Esophagus muscularis mucosa (tissue), 4 donors: ENCODE measurements at regions of chr21 and their contacts with region 1.

Region 1: DNA sequence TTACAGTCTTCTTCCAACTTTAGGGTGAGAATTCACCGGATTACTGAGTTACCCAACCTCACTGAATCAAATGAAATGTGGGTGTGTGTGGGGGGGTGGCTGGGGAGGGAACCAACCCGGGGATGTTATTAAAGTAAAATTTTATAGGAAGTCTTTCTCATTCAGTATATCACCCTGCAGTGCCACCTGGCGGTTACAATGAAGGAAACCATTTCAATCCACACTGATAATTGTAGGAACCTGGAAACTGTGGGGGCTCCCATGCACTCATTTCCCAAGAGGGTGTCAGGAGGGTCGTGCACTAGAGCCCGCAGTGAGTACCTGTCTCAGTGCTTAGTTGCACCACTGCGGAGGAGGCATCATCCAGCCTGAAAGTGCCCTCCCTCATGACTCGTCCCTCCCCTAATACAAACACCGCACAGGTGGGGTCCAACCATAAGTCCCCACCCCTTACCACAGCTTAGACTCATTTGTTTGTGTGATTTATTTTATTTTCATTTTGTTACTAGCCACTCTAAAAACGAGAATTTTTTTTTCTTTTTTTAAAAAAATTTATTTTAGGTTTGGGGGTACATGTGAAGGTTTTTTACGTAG is 29.1 kb upstream of the IGSF5 start:
- DNase-seq: no peak
- H3K4me3 ChIP-seq: no peak overlapping the region
- H3K27ac ChIP-seq: no peak overlapping the region
- H3K4me1 ChIP-seq: peaks cover 0 to 4% (median 0%) of the 10 kb centered on the region in 4 donors
- H3K27me3 ChIP-seq: peaks cover 0 to under 1% (median 0%) of the 10 kb centered on the region in 4 donors
- CTCF ChIP-seq: peak; percentile 60 to 70 (median 70)
- EP300 ChIP-seq: no peak
- POLR2A ChIP-seq: no peak

Region 2: DNA sequence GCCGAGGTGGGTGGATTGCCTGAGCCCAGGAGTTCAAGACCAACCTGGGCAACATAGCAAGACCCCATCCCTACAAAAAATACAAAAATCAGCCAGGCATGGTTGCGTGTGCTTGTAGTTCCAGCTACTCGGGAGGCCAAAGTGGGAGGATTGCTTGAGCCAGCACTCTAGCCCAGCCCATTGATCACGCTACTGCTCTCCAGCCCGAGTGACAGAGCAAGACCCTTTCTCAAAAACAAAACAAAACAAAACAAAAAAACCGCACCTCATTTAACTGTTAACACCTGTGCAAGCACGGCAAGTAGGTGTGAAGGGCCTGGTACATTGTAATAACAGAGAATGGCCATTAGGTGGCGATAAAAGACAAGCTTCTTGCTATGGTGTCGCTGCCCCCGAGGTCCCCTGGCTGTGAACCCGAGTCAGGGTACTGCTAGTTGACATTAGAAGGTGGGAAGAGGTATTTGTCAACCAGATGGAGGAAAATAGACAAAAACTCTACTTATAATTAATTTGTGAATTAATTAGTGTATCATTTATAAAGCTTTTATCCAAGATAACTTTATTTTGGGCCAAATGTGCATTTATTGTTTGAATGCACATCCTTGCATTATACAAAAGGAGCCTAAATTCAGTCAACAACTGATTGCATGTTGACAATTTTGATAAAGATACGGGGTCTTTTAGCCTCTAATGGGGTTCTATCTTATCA is 197.6 kb before region 1 on chr21:
- intact Hi-C with region 1: loop called (anchors 2 kb)
- DNase-seq: peak; percentile 89
- H3K4me3 ChIP-seq: no peak overlapping the region
- H3K27ac ChIP-seq: no peak overlapping the region
- H3K4me1 ChIP-seq: peaks cover 0 to 10% (median 5%) of the 10 kb centered on the region in 4 donors
- H3K27me3 ChIP-seq: no peaks in the 10 kb centered on the region
- CTCF ChIP-seq: peak; percentile 84 to 91 (median 90)
- EP300 ChIP-seq: no peak
- POLR2A ChIP-seq: no peak

Region 3: DNA sequence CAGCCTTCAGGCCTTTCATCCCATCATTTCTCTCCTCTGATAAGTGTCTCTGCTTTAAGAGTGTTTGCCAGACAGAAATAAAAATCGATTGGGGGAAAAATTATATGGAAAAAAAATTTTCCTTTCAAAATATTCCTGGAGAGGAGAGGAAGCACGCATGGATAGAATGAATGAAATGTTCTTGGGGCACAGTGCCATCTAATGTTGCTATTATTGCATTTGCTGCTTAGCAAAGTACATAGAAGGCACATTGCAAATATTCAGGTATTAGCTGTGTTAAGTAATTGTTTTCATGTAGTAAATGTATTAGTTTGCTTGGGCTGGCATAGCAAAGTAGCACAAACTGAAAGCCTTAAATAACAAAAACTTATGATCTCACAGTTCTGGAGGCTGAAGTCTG is 85.1 kb before region 1 on chr21:
- intact Hi-C with region 1: no loop called
- DNase-seq: no peak
- H3K4me3 ChIP-seq: no peak overlapping the region
- H3K27ac ChIP-seq: no peak overlapping the region
- H3K4me1 ChIP-seq: peaks cover 0 to 11% (median 4%) of the 10 kb centered on the region in 4 donors
- H3K27me3 ChIP-seq: peaks cover 0 to 6% (median 0%) of the 10 kb centered on the region in 4 donors
- CTCF ChIP-seq: no peak
- EP300 ChIP-seq: no peak
- POLR2A ChIP-seq: no peak

Region 4: DNA sequence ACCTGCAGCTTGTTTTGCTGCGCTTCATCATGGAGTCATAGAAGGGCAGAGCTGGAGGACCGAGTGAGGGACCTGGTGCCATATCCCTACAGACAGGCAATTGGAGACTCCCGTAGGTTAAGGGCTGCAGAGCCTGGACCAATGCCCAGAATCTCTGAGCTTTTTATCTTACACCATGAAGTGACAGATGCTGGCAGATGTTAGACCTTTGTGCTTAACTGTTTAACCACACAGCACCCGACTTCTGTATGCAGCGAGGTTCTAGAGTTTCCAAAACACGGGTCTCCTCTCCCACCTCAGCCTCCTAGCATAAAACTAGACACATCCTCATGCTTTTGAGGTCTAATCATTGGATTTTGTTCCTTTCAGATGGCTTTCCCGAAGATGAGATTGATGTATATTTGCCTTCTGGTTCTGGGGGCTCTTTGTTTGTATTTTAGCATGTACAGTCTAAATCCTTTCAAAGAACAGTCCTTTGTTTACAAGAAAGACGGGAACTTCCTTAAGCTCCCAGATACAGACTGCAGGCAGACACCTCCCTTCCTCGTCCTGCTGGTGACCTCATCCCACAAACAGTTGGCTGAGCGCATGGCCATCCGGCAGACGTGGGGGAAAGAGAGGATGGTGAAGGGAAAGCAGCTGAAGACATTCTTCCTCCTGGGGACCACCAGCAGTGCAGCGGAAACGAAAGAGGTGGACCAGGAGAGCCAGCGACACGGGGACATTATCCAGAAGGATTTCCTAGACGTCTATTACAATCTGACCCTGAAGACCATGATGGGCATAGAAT is 55.5 kb before region 1 on chr21:
- intact Hi-C with region 1: no loop called
- DNase-seq: no peak
- H3K4me3 ChIP-seq: peak overlapping the region; percentile 1 to 36 (median 30)
- H3K27ac ChIP-seq: peak overlapping the region; percentile 44 to 67 (median 55)
- H3K4me1 ChIP-seq: peaks cover 14 to 19% (median 16%) of the 10 kb centered on the region in 4 donors
- H3K27me3 ChIP-seq: no peaks in the 10 kb centered on the region
- CTCF ChIP-seq: no peak
- EP300 ChIP-seq: no peak
- POLR2A ChIP-seq: no peak